ENCODE measurements at regions of chr2 and their contacts with region 1.

Region 1: DNA sequence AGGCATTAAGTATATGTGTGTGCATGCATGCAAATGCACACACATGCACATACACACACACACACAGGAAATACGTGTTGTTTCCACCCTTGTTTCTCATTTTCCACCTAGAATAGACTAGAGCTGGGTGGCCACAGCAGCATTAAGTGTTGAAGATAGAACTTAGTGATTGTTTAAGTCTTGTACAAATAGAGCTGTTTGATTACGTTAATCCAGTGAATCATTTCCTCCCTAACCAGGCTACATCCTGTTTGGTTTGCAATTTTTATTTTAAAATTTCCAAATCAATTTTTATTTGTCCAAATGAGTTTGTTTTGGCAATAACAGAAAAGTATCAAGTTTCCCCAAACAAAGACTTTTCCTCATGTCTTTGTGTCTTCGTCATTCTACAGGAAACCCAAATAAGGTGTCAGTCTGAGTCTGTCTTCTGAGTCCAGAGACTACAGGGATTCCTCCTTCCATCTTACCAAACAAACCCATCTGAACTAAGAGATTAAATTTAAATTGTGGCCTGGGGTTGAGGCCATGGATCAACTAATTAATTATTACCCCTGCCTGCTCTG is 74.6 kb upstream of the GALNT5 start:
- DNase-seq: no peak
- H3K4me3 Mint-ChIP-seq: no peak overlapping the region
- H3K27ac Mint-ChIP-seq: peak overlapping the region; percentile 48
- H3K4me1 Mint-ChIP-seq: peaks cover 21% of the 10 kb centered on the region
- H3K27me3 Mint-ChIP-seq: peaks cover 6% of the 10 kb centered on the region

Region 2: GRCh38 chr2:156756516-156756915 is 426.4 kb before region 1 on chr2:
- CTCF ChIA-PET with region 1: no interaction called
- POLR2A ChIA-PET with region 1: no interaction called
- DNase-seq: no peak
- H3K4me3 Mint-ChIP-seq: no peak overlapping the region
- H3K27ac Mint-ChIP-seq: no peak overlapping the region
- H3K4me1 Mint-ChIP-seq: no peaks in the 10 kb centered on the region
- H3K27me3 Mint-ChIP-seq: no peaks in the 10 kb centered on the region

Region 3: DNA sequence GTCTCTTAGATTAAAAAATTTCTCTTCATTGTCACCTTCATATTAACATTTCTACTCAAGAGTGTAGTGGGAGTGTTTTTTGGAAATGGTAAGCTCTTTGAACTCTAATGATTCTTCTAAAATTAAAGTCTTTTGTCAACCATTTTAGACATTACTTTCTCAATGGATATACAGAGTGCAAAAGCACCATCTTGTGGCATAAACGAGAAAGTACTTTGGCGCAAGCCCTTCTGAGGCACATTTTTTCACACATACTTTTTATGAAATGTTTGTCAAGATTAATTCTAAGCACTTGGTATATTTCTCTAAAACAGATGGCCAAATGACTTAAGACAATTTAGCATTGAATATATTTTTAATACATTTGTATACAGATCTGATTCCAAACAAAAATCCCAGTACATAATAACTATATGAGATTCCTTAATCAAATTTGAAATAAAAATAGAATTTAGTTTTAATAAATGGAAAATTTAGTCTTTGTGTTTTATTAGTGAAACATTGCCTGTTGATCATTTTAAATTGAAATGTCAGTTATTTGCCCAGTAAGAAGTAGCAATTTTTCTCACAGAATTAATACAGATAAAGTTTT is 11.3 kb after region 1 on chr2:
- CTCF ChIA-PET with region 1: interaction called, 27 read pairs
- POLR2A ChIA-PET with region 1: no interaction called
- DNase-seq: peak; percentile 21
- H3K4me3 Mint-ChIP-seq: no peak overlapping the region
- H3K27ac Mint-ChIP-seq: no peak overlapping the region
- H3K4me1 Mint-ChIP-seq: peaks cover 11% of the 10 kb centered on the region
- H3K27me3 Mint-ChIP-seq: peaks cover 12% of the 10 kb centered on the region

Region 4: GRCh38 chr2:157244691-157245090 is 61.8 kb after region 1 on chr2:
- CTCF ChIA-PET with region 1: no interaction called
- POLR2A ChIA-PET with region 1: no interaction called
- DNase-seq: no peak
- H3K4me3 Mint-ChIP-seq: no peak overlapping the region
- H3K27ac Mint-ChIP-seq: no peak overlapping the region
- H3K4me1 Mint-ChIP-seq: peaks cover 23% of the 10 kb centered on the region
- H3K27me3 Mint-ChIP-seq: no peaks in the 10 kb centered on the region